Left lung (tissue), 14 donors: ENCODE measurements at regions of chr1 and their contacts with region 1.

Region 1: GRCh38 chr1:151104630-151105029 is 34.1 kb downstream of the GABPB2 start:
- DNase-seq: no peak
- ATAC-seq: no peak
- H3K4me3 ChIP-seq: no peak overlapping the region
- H3K27ac ChIP-seq: no peak overlapping the region
- H3K4me1 ChIP-seq: no peaks in the 10 kb centered on the region
- H3K27me3 ChIP-seq: no peaks in the 10 kb centered on the region
- CTCF ChIP-seq: no peak

Region 2: DNA sequence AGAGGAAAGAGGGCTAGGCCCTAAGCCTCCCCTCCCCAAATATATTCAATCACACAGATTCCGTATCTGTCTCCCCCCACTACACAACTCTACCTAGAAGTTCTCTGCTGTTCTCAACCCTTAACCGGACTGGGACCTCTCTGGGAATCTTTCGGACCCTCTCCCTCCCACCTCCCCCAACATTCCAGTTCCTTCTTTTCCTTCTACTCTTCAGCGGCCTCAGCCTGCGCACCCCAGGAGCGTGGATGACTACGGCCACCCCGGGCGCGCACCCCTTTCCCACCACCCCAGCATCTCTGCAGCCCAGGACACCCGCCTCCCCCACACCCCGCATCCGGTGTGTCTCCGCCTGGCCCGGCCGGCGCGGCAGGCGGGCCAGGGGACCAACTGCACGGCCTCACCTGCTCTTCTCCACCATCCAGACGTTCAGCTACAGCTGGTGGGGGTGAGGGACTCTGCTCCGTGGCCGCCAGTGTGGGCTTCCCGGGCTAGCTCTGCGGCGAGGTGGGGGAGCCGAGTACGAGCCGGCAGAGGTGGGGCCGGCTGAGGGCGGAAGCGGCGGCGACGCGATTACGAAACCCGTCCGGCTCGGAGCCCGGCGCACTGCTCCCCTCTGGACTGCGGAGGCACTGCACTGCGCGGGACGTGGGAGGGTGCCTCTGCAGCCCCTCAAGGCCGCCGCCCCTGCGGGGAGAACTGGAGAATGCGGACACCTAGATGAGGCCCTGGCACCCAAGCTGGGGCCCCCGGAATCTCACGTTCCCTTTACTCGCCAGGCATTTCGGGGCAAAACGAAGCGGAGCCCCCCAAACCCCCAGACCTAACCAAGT is 45.3 kb before region 1 on chr1 and contains the start of gene CDC42SE1:
- intact Hi-C with region 1: no loop called
- DNase-seq: peak; percentile 83 to 98 (median 90)
- ATAC-seq: peak; percentile 93
- H3K4me3 ChIP-seq: peak within 1 kb of the TSS; percentile 66 to 94
- H3K27ac ChIP-seq: peak within 1 kb of the TSS; percentile 89 to 95
- H3K4me1 ChIP-seq: peaks cover 18 to 49% of the 10 kb centered on the region in 2 donors
- H3K27me3 ChIP-seq: no peaks in the 10 kb centered on the region
- CTCF ChIP-seq: peak; percentile 81 to 92
- polyA plus RNA-seq, gene CDC42SE1: 99.1 to 133 (median 111) TPM

Region 3: GRCh38 chr1:151156515-151156819 is 51.8 kb after region 1 on chr1 and contains the start of gene TNFAIP8L2:
- intact Hi-C with region 1: loop called in 1 of 2 experiments (anchors 5 kb)
- DNase-seq: peak in 2 of 4 donors; percentile 75 to 89
- ATAC-seq: peak; percentile 81
- H3K4me3 ChIP-seq: peak within 1 kb of the TSS; percentile 22 to 57
- H3K27ac ChIP-seq: peak within 1 kb of the TSS; percentile 62 to 93
- H3K4me1 ChIP-seq: peaks cover 0 to 42% of the 10 kb centered on the region in 2 donors
- H3K27me3 ChIP-seq: no peaks in the 10 kb centered on the region
- CTCF ChIP-seq: no peak
- polyA plus RNA-seq, gene TNFAIP8L2: 2.5 to 3.3 (median 2.8) TPM

Region 4: DNA sequence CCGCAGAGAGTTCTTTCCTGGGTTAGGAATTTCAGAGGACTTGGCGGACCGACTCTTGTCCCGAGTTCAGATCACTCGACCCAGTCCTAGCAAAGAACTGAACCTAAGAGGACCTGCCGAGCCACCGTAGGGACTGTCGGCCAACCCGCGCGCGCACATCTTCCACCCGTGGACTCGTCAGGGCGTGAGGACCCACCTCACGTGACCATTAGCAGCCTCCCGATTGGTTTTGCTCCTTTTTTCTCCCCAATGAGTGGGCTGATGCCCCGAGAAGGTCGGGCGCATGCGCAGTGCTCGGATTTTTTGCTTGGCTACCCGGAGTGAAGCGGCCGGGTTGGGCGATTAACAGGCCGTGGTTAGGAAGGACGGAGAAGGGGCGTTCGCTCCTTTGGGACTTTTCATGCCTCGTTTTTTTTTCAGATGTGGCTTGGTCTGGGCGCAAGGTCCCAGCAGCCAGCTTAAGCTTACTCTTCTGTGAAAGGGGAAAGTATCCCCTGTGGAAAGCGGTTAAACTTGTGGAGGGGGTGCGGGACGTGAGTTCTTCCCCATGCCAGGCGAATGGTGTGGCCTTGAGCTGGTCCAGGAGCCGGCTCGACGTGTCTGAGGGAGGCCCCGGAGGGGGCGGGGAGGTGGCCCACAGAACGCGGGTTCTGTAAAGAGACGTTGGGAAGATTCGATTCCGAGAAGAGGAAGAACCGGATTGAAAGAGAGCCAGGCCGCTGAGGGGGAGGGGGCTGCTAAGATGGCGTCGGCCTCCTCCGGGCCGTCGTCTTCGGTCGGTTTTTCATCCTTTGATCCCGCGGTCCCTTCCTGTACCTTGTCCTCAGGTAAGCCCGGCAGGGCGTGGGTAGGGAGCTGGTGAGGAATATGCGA is 93.9 kb after region 1 on chr1 and contains the start of gene PIP5K1A:
- intact Hi-C with region 1: no loop called
- DNase-seq: peak; percentile 97 to 99 (median 98)
- ATAC-seq: peak; percentile 83
- H3K4me3 ChIP-seq: peak within 1 kb of the TSS; percentile 67 to 71
- H3K27ac ChIP-seq: peak within 1 kb of the TSS; percentile 87 to 95
- H3K4me1 ChIP-seq: peaks cover 3 to 45% of the 10 kb centered on the region in 2 donors
- H3K27me3 ChIP-seq: no peaks in the 10 kb centered on the region
- CTCF ChIP-seq: no peak
- polyA plus RNA-seq, gene PIP5K1A: 62.1 to 73.3 (median 68.3) TPM